CD4-positive, alpha-beta memory T cell (primary cell): ENCODE measurements at regions of chr9 and their contacts with region 1.

Region 1: GRCh38 chr9:3240656-3241268 is 285.0 kb downstream of the RFX3 start:
- DNase-seq: peak; percentile 38 to 53 (median 43)
- H3K4me3 ChIP-seq: no peak overlapping the region
- H3K4me3 Mint-ChIP-seq: no peak overlapping the region
- H3K27ac ChIP-seq: no peak overlapping the region
- H3K27ac Mint-ChIP-seq: no peak overlapping the region
- H3K4me1 ChIP-seq: no peaks in the 10 kb centered on the region
- H3K4me1 Mint-ChIP-seq: peaks cover 0 to 1% (median 0%) of the 10 kb centered on the region in 4 donors
- H3K27me3 ChIP-seq: no peaks in the 10 kb centered on the region
- H3K27me3 Mint-ChIP-seq: no peaks in the 10 kb centered on the region

Region 2: GRCh38 chr9:1726993-1727759 is 1513.6 kb before region 1 on chr9:
- CTCF ChIA-PET with region 1: no interaction called
- POLR2A ChIA-PET with region 1: no interaction called
- intact Hi-C with region 1: no loop called
- DNase-seq: peak in 4 of 5 donors; percentile 5 to 22 (median 14)
- H3K4me3 ChIP-seq: no peak overlapping the region
- H3K4me3 Mint-ChIP-seq: no peak overlapping the region
- H3K27ac ChIP-seq: no peak overlapping the region
- H3K27ac Mint-ChIP-seq: no peak overlapping the region
- H3K4me1 ChIP-seq: no peaks in the 10 kb centered on the region
- H3K4me1 Mint-ChIP-seq: peaks cover 0 to 1% (median 0%) of the 10 kb centered on the region in 4 donors
- H3K27me3 ChIP-seq: no peaks in the 10 kb centered on the region
- H3K27me3 Mint-ChIP-seq: peaks cover 4 to 6% of the 10 kb centered on the region in 2 donors

Region 3: GRCh38 chr9:3161665-3162306 is 79.0 kb before region 1 on chr9:
- CTCF ChIA-PET with region 1: no interaction called
- POLR2A ChIA-PET with region 1: no interaction called
- intact Hi-C with region 1: no loop called
- DNase-seq: no peak
- H3K4me3 ChIP-seq: no peak overlapping the region
- H3K4me3 Mint-ChIP-seq: no peak overlapping the region
- H3K27ac ChIP-seq: no peak overlapping the region
- H3K27ac Mint-ChIP-seq: no peak overlapping the region
- H3K4me1 ChIP-seq: no peaks in the 10 kb centered on the region
- H3K4me1 Mint-ChIP-seq: no peaks in the 10 kb centered on the region
- H3K27me3 ChIP-seq: no peaks in the 10 kb centered on the region
- H3K27me3 Mint-ChIP-seq: peaks cover 2 to 3% of the 10 kb centered on the region in 2 donors

Region 4: GRCh38 chr9:3898461-3899218 is 657.9 kb after region 1 on chr9:
- CTCF ChIA-PET with region 1: no interaction called
- POLR2A ChIA-PET with region 1: no interaction called
- intact Hi-C with region 1: no loop called
- DNase-seq: no peak
- H3K4me3 ChIP-seq: no peak overlapping the region
- H3K4me3 Mint-ChIP-seq: no peak overlapping the region
- H3K27ac ChIP-seq: no peak overlapping the region
- H3K27ac Mint-ChIP-seq: no peak overlapping the region
- H3K4me1 ChIP-seq: no peaks in the 10 kb centered on the region
- H3K4me1 Mint-ChIP-seq: no peaks in the 10 kb centered on the region
- H3K27me3 ChIP-seq: no peaks in the 10 kb centered on the region
- H3K27me3 Mint-ChIP-seq: peaks cover 0 to 3% of the 10 kb centered on the region in 2 donors

Region 5: GRCh38 chr9:4117835-4118610 is 877.3 kb after region 1 on chr9:
- CTCF ChIA-PET with region 1: interaction called, 9 read pairs
- POLR2A ChIA-PET with region 1: no interaction called
- intact Hi-C with region 1: loop called (anchors 2 kb)
- DNase-seq: peak in 4 of 5 donors; percentile 12 to 35 (median 22)
- H3K4me3 ChIP-seq: no peak overlapping the region
- H3K4me3 Mint-ChIP-seq: no peak overlapping the region
- H3K27ac ChIP-seq: no peak overlapping the region
- H3K27ac Mint-ChIP-seq: peak overlapping the region in 1 of 7 donors; percentile 31
- H3K4me1 ChIP-seq: no peaks in the 10 kb centered on the region
- H3K4me1 Mint-ChIP-seq: peaks cover 0 to 3% (median under 1%) of the 10 kb centered on the region in 4 donors
- H3K27me3 ChIP-seq: no peaks in the 10 kb centered on the region
- H3K27me3 Mint-ChIP-seq: no peaks in the 10 kb centered on the region